ENCODE measurements at regions of chr11 and their contacts with region 1.

Region 1: DNA sequence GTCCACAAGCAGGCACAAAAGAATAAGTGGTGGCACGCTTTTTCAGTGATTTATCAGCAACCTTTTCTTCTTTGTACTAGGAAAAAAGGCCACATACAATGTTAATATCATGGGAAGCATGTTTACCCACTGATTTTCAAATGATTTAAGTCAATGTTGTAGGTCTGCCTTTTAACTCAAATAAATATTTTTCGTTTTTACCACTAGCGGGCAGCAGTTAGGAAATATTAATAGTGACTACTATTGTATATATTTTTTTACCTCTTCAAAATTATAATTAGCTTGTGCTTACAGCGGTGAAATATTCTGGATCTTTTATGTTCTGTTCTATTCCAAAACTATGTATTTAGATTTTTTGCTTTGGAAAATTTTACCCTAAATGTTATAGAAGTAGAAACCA is 6.4 kb upstream of the SLC17A6 start:
- DNase-seq: no peak
- H3K4me3 ChIP-seq: no peak overlapping the region
- H3K27ac ChIP-seq: no peak overlapping the region
- H3K4me1 ChIP-seq: peaks cover 0 to 7% (median 2%) of the 10 kb centered on the region in 4 experiments; a peak in 2 of 7 replicates
- H3K27me3 ChIP-seq: no peaks in the 10 kb centered on the region
- CTCF ChIP-seq: no peak
- EP300 ChIP-seq: no peak
- POLR2A ChIP-seq: no peak
- RAD21 ChIP-seq: no peak

Region 2: GRCh38 chr11:22216940-22217339 is 114.8 kb before region 1 on chr11:
- CTCF ChIA-PET with region 1: no interaction called
- POLR2A ChIA-PET with region 1: no interaction called
- DNase-seq: no peak
- H3K4me3 ChIP-seq: no peak overlapping the region
- H3K27ac ChIP-seq: no peak overlapping the region
- H3K4me1 ChIP-seq: no peaks in the 10 kb centered on the region
- H3K27me3 ChIP-seq: no peaks in the 10 kb centered on the region
- CTCF ChIP-seq: no peak
- EP300 ChIP-seq: no peak
- POLR2A ChIP-seq: no peak
- RAD21 ChIP-seq: no peak

Region 3: GRCh38 chr11:22317656-22318055 is 14.1 kb before region 1 on chr11:
- CTCF ChIA-PET with region 1: interaction called, 11 read pairs
- POLR2A ChIA-PET with region 1: no interaction called
- DNase-seq: no peak
- H3K4me3 ChIP-seq: no peak overlapping the region
- H3K27ac ChIP-seq: no peak overlapping the region
- H3K4me1 ChIP-seq: no peaks in the 10 kb centered on the region
- H3K27me3 ChIP-seq: no peaks in the 10 kb centered on the region
- CTCF ChIP-seq: no peak
- EP300 ChIP-seq: no peak
- POLR2A ChIP-seq: no peak
- RAD21 ChIP-seq: no peak

Region 4: DNA sequence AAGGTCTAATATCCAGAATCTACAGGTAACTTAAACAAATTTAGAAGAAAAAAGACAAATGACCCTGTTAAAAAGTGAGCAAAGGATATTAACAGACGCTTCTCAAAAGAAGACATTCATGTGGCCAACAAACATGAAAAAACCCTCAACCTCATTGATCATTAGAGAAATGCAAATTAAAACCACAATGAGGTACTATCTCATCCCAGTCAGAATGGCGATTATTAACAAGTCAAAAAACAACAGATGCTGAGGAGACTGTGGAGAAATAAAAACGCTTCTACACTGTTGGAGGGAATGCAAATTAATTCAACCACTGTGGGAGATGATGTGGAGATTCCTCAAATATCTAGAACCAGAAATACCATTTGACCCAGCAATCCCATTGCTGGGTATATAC is 73.6 kb after region 1 on chr11:
- CTCF ChIA-PET with region 1: no interaction called
- POLR2A ChIA-PET with region 1: no interaction called
- DNase-seq: no peak
- H3K4me3 ChIP-seq: no peak overlapping the region
- H3K27ac ChIP-seq: no peak overlapping the region
- H3K4me1 ChIP-seq: 0 out of 7 replicates have a peak, but pooled peaks cover 0 to 2% (median 0%) of the 10 kb centered on the region in 4 experiments
- H3K27me3 ChIP-seq: no peaks in the 10 kb centered on the region
- CTCF ChIP-seq: no peak
- EP300 ChIP-seq: no peak
- POLR2A ChIP-seq: no peak
- RAD21 ChIP-seq: no peak

Measured in H1 (cell line).